Endothelial cell of umbilical vein (primary cell): ENCODE measurements at regions of chr18 and their contacts with region 1.

Region 1: GRCh38 chr18:12236934-12237832 is 17.0 kb upstream of the CIDEA start:
- DNase-seq: peak; percentile 63
- H3K4me3 ChIP-seq: no peak overlapping the region
- H3K27ac ChIP-seq: no peak overlapping the region
- H3K4me1 ChIP-seq: peaks cover 12% of the 10 kb centered on the region
- H3K27me3 ChIP-seq: peaks cover 11 to 19% of the 10 kb centered on the region in 2 experiments
- CTCF ChIP-seq: peak; percentile 95 to 99
- POLR2A ChIP-seq: no peak

Region 2: DNA sequence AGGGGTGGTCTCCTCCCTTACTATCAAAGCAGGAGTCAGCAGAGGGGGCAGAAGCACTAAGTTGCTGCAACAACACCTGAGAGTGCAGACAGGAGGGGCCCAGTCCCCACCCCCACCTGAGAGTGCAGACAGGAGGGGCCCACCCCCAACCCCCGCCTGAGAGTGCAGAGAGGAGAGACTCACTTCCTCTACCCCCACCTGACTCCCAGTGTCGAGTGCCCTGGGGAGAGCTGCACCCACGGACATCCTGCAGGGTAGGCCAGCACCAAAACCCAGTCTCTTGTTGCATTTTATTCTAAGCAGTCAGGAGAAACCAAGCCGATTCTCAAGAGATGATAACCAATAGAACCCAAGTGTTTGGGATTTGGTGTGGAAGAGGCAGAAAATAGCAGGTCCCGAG is 1633.0 kb before region 1 on chr18:
- CTCF ChIA-PET with region 1: no interaction called
- POLR2A ChIA-PET with region 1: no interaction called
- dilution Hi-C with region 1: no loop called
- intact Hi-C with region 1: loop called (anchors 10 kb)
- DNase-seq: no peak
- H3K4me3 ChIP-seq: no peak overlapping the region
- H3K27ac ChIP-seq: no peak overlapping the region
- H3K4me1 ChIP-seq: no peaks in the 10 kb centered on the region
- H3K27me3 ChIP-seq: no peaks in the 10 kb centered on the region
- CTCF ChIP-seq: no peak
- POLR2A ChIP-seq: no peak

Region 3: GRCh38 chr18:11654736-11655605 is 582.2 kb before region 1 on chr18:
- CTCF ChIA-PET with region 1: interaction called, 10 read pairs
- POLR2A ChIA-PET with region 1: no interaction called
- dilution Hi-C with region 1: no loop called
- intact Hi-C with region 1: loop called (anchors 10 kb)
- DNase-seq: peak; percentile 32
- H3K4me3 ChIP-seq: no peak overlapping the region
- H3K27ac ChIP-seq: no peak overlapping the region
- H3K4me1 ChIP-seq: no peaks in the 10 kb centered on the region
- H3K27me3 ChIP-seq: peaks cover 0 to 2% of the 10 kb centered on the region in 2 experiments
- CTCF ChIP-seq: peak; percentile 80 to 84
- POLR2A ChIP-seq: no peak

Region 4: DNA sequence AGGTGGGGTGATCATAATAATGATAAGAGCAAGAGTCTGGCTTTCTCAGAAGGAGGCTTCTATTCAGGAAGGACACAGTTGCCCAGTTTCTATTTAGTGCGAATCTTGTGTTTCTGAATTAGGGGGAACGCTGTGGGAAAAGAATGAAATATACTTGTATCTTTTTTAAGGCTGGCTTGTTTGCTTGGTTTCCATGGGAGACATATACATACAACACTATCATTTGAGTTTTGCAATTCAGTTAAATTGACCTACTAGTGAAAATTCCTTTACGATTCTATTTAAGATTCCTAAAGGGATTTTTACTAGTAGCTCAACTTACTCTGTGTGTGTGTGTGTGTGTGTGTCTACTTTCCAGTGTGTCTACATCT is 168.2 kb before region 1 on chr18:
- CTCF ChIA-PET with region 1: interaction called, 28 read pairs
- POLR2A ChIA-PET with region 1: no interaction called
- dilution Hi-C with region 1: no loop called
- intact Hi-C with region 1: loop called (anchors 1 kb)
- DNase-seq: peak; percentile 38
- H3K4me3 ChIP-seq: peak overlapping the region in 2 of 3 experiments; percentile 8 to 43
- H3K27ac ChIP-seq: no peak overlapping the region
- H3K4me1 ChIP-seq: peaks cover 9% of the 10 kb centered on the region
- H3K27me3 ChIP-seq: no peaks in the 10 kb centered on the region
- CTCF ChIP-seq: no peak
- POLR2A ChIP-seq: no peak

Region 5: DNA sequence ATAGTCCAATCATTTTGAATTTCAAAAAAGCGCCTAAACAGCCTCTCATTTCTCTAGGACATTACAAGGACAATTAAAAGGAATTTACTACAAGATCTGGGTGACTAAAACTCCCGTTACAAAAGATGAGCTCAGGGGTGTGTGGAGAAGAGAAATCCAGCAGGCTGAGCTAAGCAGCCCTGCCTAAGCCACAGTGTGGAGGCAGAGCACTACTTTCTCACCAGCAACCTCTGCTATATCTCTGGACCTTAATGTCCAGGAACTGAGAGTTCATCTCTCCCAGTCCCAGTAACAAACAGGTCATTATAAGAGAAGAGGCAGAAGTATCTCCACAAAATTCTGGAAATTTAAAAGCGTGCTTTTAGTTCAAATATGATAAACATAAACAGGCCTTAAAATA is 162.4 kb before region 1 on chr18:
- CTCF ChIA-PET with region 1: interaction called, 28 read pairs
- POLR2A ChIA-PET with region 1: no interaction called
- dilution Hi-C with region 1: no loop called
- intact Hi-C with region 1: no loop called
- DNase-seq: no peak
- H3K4me3 ChIP-seq: no peak overlapping the region
- H3K27ac ChIP-seq: no peak overlapping the region
- H3K4me1 ChIP-seq: peaks cover 14% of the 10 kb centered on the region
- H3K27me3 ChIP-seq: no peaks in the 10 kb centered on the region
- CTCF ChIP-seq: no peak
- POLR2A ChIP-seq: no peak

Region 6: DNA sequence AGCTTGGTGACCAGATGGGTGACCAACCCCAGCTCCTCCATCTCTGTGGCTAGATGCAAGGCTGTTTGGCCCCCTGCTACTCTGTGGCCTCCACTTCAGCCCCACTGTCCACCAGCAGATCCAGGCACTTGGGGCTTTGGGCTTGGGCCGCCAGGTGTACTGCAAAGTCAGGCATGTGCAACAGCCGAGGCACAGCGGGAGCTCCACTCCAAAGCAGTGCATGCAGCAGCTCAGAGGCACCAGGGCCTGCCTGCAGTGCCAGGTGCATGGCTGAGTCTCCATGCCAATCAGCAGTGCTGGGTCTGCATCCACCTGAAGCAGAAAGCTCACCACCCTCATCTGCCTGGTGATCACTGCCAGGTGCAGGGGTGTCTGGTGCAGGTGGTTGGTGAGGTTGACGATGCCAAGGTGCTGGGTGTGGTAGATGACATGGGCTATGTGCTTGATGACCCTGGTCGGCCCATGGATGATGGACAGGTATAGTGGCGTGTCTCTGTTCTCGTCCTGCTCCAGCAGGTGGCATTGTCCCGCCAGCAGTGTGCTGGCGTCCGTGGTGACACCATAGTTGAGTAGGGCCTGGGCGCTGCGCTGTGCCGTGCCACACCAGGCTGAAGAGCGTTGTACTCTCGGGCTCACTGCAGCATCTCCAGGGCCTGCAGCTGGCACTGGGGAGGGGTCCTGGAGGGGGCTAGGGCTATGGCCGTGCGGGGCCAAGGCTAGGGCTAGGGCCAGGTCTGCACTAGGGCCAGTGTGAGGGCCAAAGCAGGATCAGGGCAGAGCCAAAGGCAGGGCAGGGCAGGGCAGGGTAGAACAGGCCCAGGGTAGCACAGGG is 144.6 kb before region 1 on chr18:
- CTCF ChIA-PET with region 1: interaction called, 4 read pairs
- POLR2A ChIA-PET with region 1: no interaction called
- dilution Hi-C with region 1: no loop called
- intact Hi-C with region 1: loop called (anchors 1 kb)
- DNase-seq: no peak
- H3K4me3 ChIP-seq: no peak overlapping the region
- H3K27ac ChIP-seq: no peak overlapping the region
- H3K4me1 ChIP-seq: no peaks in the 10 kb centered on the region
- H3K27me3 ChIP-seq: peaks cover 0 to 4% of the 10 kb centered on the region in 2 experiments
- CTCF ChIP-seq: no peak
- POLR2A ChIP-seq: no peak

Region 7: GRCh38 chr18:12254136-12254829 is 17.1 kb after region 1 on chr18 and contains the start of gene CIDEA:
- CTCF ChIA-PET with region 1: interaction called, 15 read pairs
- POLR2A ChIA-PET with region 1: no interaction called
- dilution Hi-C with region 1: no loop called
- intact Hi-C with region 1: no loop called
- DNase-seq: no peak
- H3K4me3 ChIP-seq: peak within 1 kb of the TSS in 2 of 3 experiments; percentile 7 to 39
- H3K27ac ChIP-seq: no peak within 1 kb of the TSS
- H3K4me1 ChIP-seq: peaks cover 26% of the 10 kb centered on the region
- H3K27me3 ChIP-seq: peaks cover 22 to 30% of the 10 kb centered on the region in 2 experiments
- CTCF ChIP-seq: no peak
- POLR2A ChIP-seq: no peak
- total RNA-seq, gene CIDEA: 0.42 and 1.8 TPM in 2 replicates

Region 8: DNA sequence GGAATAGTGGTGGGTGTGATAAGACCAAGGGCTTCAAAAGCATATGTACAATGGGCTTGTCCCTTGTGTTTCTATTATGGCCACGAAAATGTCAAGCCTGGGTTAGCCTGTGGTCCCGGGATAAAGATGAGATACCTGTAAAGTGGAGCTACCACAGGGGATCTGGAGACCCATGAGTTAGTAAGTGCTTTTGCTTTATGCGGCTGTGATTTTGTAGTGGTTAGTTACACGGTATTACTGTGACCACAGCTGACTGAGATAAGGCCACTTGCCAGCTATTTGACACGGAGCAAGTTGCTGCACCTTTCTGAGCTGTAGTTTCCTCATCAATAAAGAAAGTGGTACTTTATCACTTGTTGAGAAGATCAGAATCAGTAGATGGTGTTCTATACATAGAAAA is 269.8 kb after region 1 on chr18:
- CTCF ChIA-PET with region 1: no interaction called
- POLR2A ChIA-PET with region 1: no interaction called
- dilution Hi-C with region 1: no loop called
- intact Hi-C with region 1: no loop called
- DNase-seq: no peak
- H3K4me3 ChIP-seq: no peak overlapping the region
- H3K27ac ChIP-seq: no peak overlapping the region
- H3K4me1 ChIP-seq: no peaks in the 10 kb centered on the region
- H3K27me3 ChIP-seq: no peaks in the 10 kb centered on the region
- CTCF ChIP-seq: no peak
- POLR2A ChIP-seq: no peak